HepG2 (cell line): ENCODE measurements at regions of chr2 and their contacts with region 1.

Region 1: GRCh38 chr2:158903711-158904443 is 64.6 kb upstream of the TANC1 start:
- DNase-seq: no peak
- ATAC-seq: no peak
- H3K4me3 ChIP-seq: no peak overlapping the region
- H3K27ac ChIP-seq: no peak overlapping the region
- H3K4me1 ChIP-seq: no peaks in the 10 kb centered on the region
- H3K27me3 ChIP-seq: no peaks in the 10 kb centered on the region
- CTCF ChIP-seq: no peak
- EP300 ChIP-seq: no peak
- POLR2A ChIP-seq: no peak
- RAD21 ChIP-seq: no peak

Region 2: GRCh38 chr2:158936978-158937377 is 33.1 kb after region 1 on chr2:
- CTCF ChIA-PET with region 1: no interaction called
- POLR2A ChIA-PET with region 1: no interaction called
- in situ Hi-C with region 1: no loop called
- intact Hi-C with region 1: no loop called
- DNase-seq: no peak
- ATAC-seq: no peak
- H3K4me3 ChIP-seq: no peak overlapping the region
- H3K27ac ChIP-seq: no peak overlapping the region
- H3K4me1 ChIP-seq: no peaks in the 10 kb centered on the region
- H3K27me3 ChIP-seq: peaks cover 0 to 4% of the 10 kb centered on the region in 2 experiments; a peak in 2 of 5 replicates
- CTCF ChIP-seq: no peak
- EP300 ChIP-seq: no peak
- POLR2A ChIP-seq: no peak
- RAD21 ChIP-seq: no peak

Region 3: DNA sequence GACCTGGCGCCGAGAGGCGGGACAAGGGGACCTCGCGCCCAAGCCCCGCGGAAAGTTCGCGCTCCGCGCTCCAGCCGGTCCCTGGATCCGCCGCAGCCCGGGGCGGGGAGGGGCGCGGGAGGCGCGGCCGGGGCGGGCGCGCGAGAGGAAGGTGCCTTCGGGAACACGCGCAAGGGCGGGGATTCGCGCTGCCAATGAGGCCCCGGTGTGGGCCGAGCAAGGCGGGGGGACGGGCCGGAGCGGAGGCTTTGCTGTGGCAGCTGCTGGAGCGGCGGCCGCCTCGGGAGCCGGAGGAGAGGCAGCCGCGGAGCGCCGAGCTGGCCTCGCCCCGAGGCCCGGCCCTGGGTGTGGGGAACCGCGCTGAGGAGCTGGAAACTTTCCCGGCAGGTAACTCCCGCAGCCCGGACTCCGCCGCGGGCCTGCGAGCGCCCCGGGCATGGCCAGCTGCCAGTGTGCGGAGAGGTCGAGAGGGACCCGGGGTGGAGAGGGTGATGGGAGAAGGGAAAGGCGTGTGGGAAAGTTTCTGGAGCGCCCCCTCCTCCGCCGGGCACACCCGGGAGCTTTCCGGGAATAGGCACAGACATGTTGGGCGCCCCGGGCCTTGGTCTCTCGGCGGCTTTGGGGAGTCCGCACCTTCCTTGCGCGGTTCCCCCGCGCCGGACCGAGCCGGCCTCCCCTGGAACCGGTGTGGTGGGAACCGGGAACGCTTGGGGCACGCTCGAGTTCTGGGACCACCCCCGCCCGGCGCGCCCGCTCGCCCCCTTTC is 64.7 kb after region 1 on chr2 and contains the start of gene TANC1:
- CTCF ChIA-PET with region 1: no interaction called
- POLR2A ChIA-PET with region 1: no interaction called
- in situ Hi-C with region 1: no loop called
- intact Hi-C with region 1: loop called (anchors 5 kb)
- DNase-seq: peak; percentile 77
- ATAC-seq: peak; percentile 93
- H3K4me3 ChIP-seq: peak within 1 kb of the TSS; percentile 71 to 84 (median 76)
- H3K27ac ChIP-seq: no peak within 1 kb of the TSS
- H3K4me1 ChIP-seq: peaks cover 34% of the 10 kb centered on the region
- H3K27me3 ChIP-seq: peaks cover 0 to 52% of the 10 kb centered on the region in 2 experiments; a peak in 4 of 5 replicates
- CTCF ChIP-seq: no peak; the same call in 1 of the 2 replicates
- EP300 ChIP-seq: no peak
- POLR2A ChIP-seq: peak; percentile 35 to 54; a peak in 3 of 4 replicates
- RAD21 ChIP-seq: no peak
- total RNA-seq, gene TANC1: 2.3 and 2.8 TPM in 2 replicates

Region 4: DNA sequence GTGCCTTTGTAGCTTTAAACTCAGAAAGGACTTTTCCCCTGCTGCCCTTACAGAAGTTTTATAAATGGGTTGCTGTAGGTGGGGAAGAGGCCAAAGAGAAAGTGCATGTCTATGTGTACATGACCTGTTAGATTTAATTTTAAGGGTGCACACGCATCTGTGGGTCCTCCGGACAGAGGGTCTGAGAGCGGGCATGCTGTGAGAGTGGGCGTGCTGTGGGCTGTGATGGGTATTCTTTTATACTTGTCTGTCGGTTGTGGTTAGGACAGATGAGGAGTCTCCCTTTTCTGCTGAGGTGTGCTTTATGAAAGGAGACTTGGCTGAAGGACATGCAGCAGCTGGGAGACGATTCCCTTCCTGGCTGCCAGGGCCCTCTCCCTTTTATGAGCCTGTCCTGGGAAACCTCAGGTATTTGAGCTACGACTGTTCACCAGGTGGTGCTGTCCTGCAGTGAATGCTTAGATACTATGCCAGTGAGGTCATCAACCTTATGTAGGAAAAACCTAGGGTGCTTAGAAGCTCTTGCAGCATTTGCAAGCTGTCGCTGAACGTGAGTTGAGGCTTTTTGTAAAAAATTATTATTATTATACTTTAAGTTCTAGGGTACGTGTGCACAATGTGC is 132.0 kb after region 1 on chr2:
- CTCF ChIA-PET with region 1: no interaction called
- POLR2A ChIA-PET with region 1: no interaction called
- in situ Hi-C with region 1: no loop called
- intact Hi-C with region 1: loop called (anchors 2 kb)
- DNase-seq: peak; percentile 83
- ATAC-seq: peak; percentile 100
- H3K4me3 ChIP-seq: no peak overlapping the region
- H3K27ac ChIP-seq: no peak overlapping the region
- H3K4me1 ChIP-seq: peaks cover 14% of the 10 kb centered on the region
- H3K27me3 ChIP-seq: no peaks in the 10 kb centered on the region
- CTCF ChIP-seq: peak; percentile 86
- EP300 ChIP-seq: no peak
- POLR2A ChIP-seq: no peak
- RAD21 ChIP-seq: peak; percentile 84

Region 5: DNA sequence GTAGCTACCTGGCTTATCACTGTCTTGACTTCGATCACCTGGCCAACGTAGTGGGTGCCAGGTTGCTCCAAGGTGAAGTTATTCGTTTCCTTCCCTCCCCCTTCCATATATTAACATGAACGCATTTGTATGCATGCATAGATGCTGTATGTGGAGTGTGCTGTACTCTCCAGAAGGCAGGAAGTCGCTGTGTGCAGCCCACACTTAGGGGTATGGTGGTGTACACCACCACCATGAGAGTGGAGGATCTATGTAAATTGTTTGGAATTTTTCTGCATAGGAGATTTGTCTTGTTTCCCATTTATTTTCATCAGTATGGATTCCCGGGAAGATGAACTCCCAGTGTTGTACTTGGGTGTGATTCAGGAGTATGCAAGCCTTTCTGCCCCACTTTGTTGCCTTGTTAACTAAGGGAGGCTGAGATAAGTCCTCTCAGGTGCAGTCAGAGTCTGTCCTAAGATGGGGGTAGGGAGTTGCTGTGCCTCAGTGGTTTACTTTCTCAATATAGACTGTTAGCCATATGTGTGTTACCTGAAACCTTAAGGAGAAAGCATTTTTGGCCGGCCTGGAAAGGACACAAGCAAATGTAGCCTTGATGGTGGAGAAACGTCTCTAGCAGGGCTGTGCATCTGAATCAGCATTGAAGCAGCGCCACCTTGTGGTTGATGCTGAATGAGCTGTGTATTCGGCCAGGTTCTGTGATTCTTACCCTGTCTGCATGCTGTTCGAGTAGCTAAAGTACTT is 214.4 kb after region 1 on chr2:
- CTCF ChIA-PET with region 1: interaction called, 71 read pairs
- POLR2A ChIA-PET with region 1: no interaction called
- in situ Hi-C with region 1: loop called (anchors 5 kb)
- intact Hi-C with region 1: loop called (anchors 1 kb)
- DNase-seq: peak; percentile 68
- ATAC-seq: peak; percentile 97
- H3K4me3 ChIP-seq: no peak overlapping the region
- H3K27ac ChIP-seq: no peak overlapping the region
- H3K4me1 ChIP-seq: no peaks in the 10 kb centered on the region
- H3K27me3 ChIP-seq: no peaks in the 10 kb centered on the region
- CTCF ChIP-seq: peak; percentile 97
- EP300 ChIP-seq: no peak
- POLR2A ChIP-seq: no peak
- RAD21 ChIP-seq: peak; percentile 94

Region 6: GRCh38 chr2:159124441-159124911 is 220.6 kb after region 1 on chr2:
- CTCF ChIA-PET with region 1: interaction called, 71 read pairs
- POLR2A ChIA-PET with region 1: no interaction called
- in situ Hi-C with region 1: loop called (anchors 5 kb)
- intact Hi-C with region 1: no loop called
- DNase-seq: peak; percentile 59
- ATAC-seq: peak; percentile 66
- H3K4me3 ChIP-seq: no peak overlapping the region
- H3K27ac ChIP-seq: no peak overlapping the region
- H3K4me1 ChIP-seq: peaks cover 11% of the 10 kb centered on the region
- H3K27me3 ChIP-seq: no peaks in the 10 kb centered on the region
- CTCF ChIP-seq: no peak
- EP300 ChIP-seq: no peak
- POLR2A ChIP-seq: no peak
- RAD21 ChIP-seq: no peak

Region 7: GRCh38 chr2:159968279-159968900 is 1064.5 kb after region 1 on chr2:
- CTCF ChIA-PET with region 1: interaction called, 8 read pairs
- POLR2A ChIA-PET with region 1: no interaction called
- in situ Hi-C with region 1: no loop called
- intact Hi-C with region 1: loop called (anchors 5 kb)
- DNase-seq: peak; percentile 31
- ATAC-seq: peak; percentile 89
- H3K4me3 ChIP-seq: no peak overlapping the region
- H3K27ac ChIP-seq: no peak overlapping the region
- H3K4me1 ChIP-seq: no peaks in the 10 kb centered on the region
- H3K27me3 ChIP-seq: no peaks in the 10 kb centered on the region
- CTCF ChIP-seq: peak; percentile 75
- EP300 ChIP-seq: no peak
- POLR2A ChIP-seq: no peak
- RAD21 ChIP-seq: peak; percentile 52; the same call in 1 of the 2 replicates